Activated CD4-positive, alpha-beta T cell treated with anti-CD3 and anti-CD28 coated beads for 36 hours (primary cell): ENCODE measurements at regions of chr18 and their contacts with region 1.

Region 1: GRCh38 chr18:23503038-23503962 is at the start of gene RMC1:
- DNase-seq: peak; percentile 99
- ATAC-seq: peak; percentile 91
- H3K4me3 Mint-ChIP-seq: peak within 1 kb of the TSS; percentile 94
- H3K27ac Mint-ChIP-seq: peak within 1 kb of the TSS; percentile 94
- H3K4me1 Mint-ChIP-seq: peaks cover 38% of the 10 kb centered on the region
- H3K27me3 Mint-ChIP-seq: no peaks in the 10 kb centered on the region
- total RNA-seq, gene RMC1: 28.7 to 29.8 TPM

Region 2: DNA sequence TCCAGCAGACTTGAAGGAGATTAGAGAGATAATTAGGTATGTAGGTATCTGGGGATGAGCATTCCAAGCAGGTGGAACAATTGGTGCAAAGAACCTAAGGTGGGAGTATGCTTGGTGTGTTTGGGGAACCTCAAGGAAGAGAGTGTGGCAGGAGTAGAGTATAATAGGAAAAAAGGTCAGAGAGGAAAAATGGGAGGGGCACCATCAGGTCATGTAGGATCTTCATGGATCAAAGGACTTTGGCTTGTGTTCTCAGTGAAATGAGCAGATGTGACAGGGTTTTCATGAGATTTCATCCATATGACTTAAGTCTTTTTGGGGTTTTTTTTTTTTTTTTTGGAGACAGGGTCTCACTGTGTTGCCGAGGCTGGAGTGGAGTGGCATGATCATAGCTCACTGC is 522.9 kb before region 1 on chr18:
- CTCF ChIA-PET with region 1: no interaction called
- POLR2A ChIA-PET with region 1: no interaction called
- intact Hi-C with region 1: no loop called
- DNase-seq: no peak
- ATAC-seq: no peak
- H3K4me3 Mint-ChIP-seq: no peak overlapping the region
- H3K27ac Mint-ChIP-seq: no peak overlapping the region
- H3K4me1 Mint-ChIP-seq: peaks cover 19% of the 10 kb centered on the region
- H3K27me3 Mint-ChIP-seq: no peaks in the 10 kb centered on the region

Region 3: DNA sequence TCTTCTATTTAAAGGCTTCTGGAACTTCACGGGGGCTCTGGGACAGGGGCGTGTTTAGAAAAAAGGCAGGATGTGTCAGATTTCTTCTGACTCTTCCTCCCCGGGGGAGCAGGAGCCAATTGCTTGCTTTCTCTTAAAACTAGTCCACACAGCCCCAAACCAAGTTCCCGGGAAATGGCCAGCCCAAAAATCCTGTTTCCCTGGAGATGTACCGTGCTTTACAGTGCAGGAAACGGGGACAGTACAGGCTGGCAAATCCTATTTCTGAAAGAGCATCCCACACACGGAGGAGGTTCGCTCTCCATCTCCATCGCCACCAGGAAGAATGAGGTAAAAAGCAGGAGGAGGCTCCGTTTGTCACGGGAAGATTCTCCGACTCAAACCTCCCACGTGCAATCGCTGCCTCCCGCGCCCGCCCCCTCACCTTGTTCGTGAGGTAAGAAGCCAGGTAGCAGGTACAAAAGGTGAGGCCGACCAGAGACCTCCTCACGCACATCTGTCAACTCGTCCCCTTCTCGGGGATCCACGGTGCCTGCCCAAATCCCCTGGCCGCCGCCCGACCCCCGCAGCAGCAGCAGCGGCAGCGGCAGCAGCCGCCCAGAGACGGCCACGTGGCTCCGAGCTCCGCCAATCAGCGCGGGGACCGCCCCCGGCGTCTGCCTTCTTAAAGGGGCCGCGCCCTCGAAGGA is 65.8 kb before region 1 on chr18:
- CTCF ChIA-PET with region 1: interaction called, 3 read pairs
- POLR2A ChIA-PET with region 1: no interaction called
- intact Hi-C with region 1: loop called in 1 of 2 experiments (anchors 1 kb)
- DNase-seq: peak; percentile 91
- ATAC-seq: peak; percentile 100
- H3K4me3 Mint-ChIP-seq: peak overlapping the region; percentile 93
- H3K27ac Mint-ChIP-seq: peak overlapping the region; percentile 89
- H3K4me1 Mint-ChIP-seq: peaks cover 17% of the 10 kb centered on the region
- H3K27me3 Mint-ChIP-seq: no peaks in the 10 kb centered on the region

Region 4: GRCh38 chr18:23468753-23469459 is 34.4 kb before region 1 on chr18:
- CTCF ChIA-PET with region 1: interaction called, 12 read pairs
- POLR2A ChIA-PET with region 1: no interaction called
- intact Hi-C with region 1: no loop called
- DNase-seq: no peak
- ATAC-seq: no peak
- H3K4me3 Mint-ChIP-seq: no peak overlapping the region
- H3K27ac Mint-ChIP-seq: no peak overlapping the region
- H3K4me1 Mint-ChIP-seq: no peaks in the 10 kb centered on the region
- H3K27me3 Mint-ChIP-seq: no peaks in the 10 kb centered on the region

Region 5: GRCh38 chr18:23515911-23516546 is 12.7 kb after region 1 on chr18:
- CTCF ChIA-PET with region 1: interaction called, 40 read pairs
- POLR2A ChIA-PET with region 1: no interaction called
- intact Hi-C with region 1: no loop called
- DNase-seq: peak; percentile 86
- ATAC-seq: peak; percentile 98
- H3K4me3 Mint-ChIP-seq: no peak overlapping the region
- H3K27ac Mint-ChIP-seq: peak overlapping the region; percentile 60
- H3K4me1 Mint-ChIP-seq: peaks cover 9% of the 10 kb centered on the region
- H3K27me3 Mint-ChIP-seq: no peaks in the 10 kb centered on the region

Region 6: DNA sequence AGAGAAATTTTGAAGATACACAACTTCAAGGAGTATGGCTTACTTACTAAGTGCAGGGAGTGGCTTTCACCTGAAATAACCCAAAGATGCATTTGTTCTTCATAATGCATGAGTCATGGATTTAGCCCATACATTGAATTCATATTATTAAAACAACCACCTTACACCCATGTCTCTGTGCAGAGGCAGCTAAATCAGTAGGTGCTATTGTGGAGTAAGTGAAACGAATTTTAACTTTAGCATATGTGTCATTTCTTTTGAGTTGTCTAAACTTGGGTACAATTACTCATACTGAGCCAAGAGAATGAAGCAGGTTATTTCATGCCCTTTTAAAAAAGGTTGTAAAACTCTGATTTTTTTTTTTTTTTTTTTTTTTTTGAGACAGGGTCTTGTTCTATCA is 170.4 kb after region 1 on chr18:
- CTCF ChIA-PET with region 1: no interaction called
- POLR2A ChIA-PET with region 1: no interaction called
- intact Hi-C with region 1: loop called in 1 of 2 experiments (anchors 2 kb)
- DNase-seq: peak; percentile 20
- ATAC-seq: peak; percentile 97
- H3K4me3 Mint-ChIP-seq: no peak overlapping the region
- H3K27ac Mint-ChIP-seq: peak overlapping the region; percentile 20
- H3K4me1 Mint-ChIP-seq: peaks cover 14% of the 10 kb centered on the region
- H3K27me3 Mint-ChIP-seq: peaks cover 8% of the 10 kb centered on the region

Region 7: DNA sequence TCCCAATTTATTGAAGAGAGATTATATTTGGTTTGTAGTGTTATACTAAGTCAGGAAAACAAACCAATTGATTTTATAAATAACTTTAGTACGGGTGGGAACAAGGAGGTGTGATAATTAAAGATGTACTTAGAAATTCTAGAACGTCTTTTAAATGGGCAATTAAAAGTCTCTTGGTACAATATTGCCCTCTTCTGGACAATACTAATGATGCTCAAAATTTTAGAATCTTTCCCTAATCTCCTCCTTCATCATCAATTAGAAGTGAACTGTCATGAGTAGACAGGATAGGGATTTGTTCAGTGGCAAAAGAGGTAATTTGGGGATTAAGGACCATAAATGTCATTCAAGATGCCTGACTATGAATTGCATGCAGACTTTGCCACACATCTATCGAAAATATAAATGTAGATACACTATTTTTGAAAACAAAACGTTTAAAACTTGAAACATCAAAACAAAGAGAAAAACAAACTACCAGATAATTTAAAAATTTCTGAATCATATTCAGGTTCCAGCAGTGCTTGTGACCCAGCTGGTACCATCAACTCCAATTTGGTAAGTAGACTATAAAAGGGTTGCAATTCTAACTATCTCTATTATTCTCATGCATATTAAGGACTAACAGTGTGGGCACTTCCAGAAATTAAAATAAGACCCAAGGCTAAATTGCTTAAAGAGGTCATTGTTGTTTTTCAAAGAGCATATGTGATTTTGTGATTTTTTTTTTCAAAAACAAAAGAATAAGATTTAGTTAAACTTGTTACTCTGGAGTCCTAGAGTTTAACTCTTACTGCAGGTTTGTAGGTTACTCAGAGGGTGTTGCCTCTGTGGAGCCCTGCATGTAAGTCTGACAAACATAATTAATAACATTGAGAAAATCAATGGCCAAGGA is 309.5 kb after region 1 on chr18:
- CTCF ChIA-PET with region 1: interaction called, 4 read pairs
- POLR2A ChIA-PET with region 1: no interaction called
- intact Hi-C with region 1: loop called (anchors 2 kb)
- DNase-seq: no peak
- ATAC-seq: no peak
- H3K4me3 Mint-ChIP-seq: no peak overlapping the region
- H3K27ac Mint-ChIP-seq: no peak overlapping the region
- H3K4me1 Mint-ChIP-seq: peaks cover 13% of the 10 kb centered on the region
- H3K27me3 Mint-ChIP-seq: peaks cover 2% of the 10 kb centered on the region

Region 8: DNA sequence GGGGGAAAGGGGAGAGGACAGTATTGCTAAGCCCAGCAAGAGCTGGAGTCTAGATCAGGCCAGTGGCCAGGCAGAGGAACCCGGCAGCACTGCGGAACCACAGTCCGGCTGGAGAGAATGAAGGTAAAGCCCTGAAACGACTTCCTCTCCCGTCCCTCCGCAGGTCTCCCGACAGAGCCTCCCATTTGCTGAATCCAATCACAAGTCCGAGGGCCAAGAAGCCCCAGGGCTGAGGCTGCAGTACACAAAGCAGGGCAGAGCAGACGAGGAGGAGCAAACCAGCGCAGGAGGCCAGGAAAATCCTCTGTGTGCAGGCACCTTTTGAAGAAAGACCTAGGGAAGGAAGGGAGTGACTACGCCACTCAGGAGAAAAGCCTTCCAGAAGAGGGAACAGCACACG is 790.0 kb after region 1 on chr18:
- CTCF ChIA-PET with region 1: no interaction called
- POLR2A ChIA-PET with region 1: no interaction called
- intact Hi-C with region 1: no loop called
- DNase-seq: no peak
- ATAC-seq: no peak
- H3K4me3 Mint-ChIP-seq: no peak overlapping the region
- H3K27ac Mint-ChIP-seq: no peak overlapping the region
- H3K4me1 Mint-ChIP-seq: peaks cover 3% of the 10 kb centered on the region
- H3K27me3 Mint-ChIP-seq: no peaks in the 10 kb centered on the region